Naive thymus-derived CD8-positive, alpha-beta T cell (primary cell): ENCODE measurements at regions of chr5 and their contacts with region 1.

Region 1: DNA sequence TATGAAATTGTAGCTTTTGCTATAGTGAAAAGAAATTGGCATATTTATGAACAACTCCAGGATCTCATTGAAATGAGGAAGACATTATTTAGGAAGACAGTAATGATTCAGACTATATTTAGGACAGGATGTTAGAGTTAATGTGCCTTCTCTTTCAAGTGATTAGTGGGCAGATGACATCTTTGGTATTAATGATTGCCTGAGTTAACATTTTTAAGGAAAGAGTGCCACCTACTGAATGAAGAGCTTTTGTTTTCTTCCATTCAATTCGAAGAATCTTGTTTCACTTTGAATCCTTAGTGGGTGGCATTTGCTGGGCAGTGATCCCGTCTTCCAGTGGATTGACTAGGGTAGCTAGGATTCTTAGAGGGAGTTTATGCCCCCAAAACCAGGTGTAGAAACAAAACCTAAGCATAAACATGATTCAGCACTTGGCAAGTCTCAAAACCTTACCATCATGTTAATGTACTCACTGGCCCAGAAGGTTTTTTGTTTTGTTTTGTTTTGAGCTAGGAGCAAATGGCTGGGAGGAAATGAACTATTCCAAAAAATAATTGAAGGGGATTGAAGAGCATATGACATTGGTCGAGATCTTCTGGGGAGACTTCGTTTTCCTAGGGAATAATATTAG is 23.2 kb downstream of the MAP3K1 start:
- DNase-seq: peak in 3 of 10 donors; percentile 46 to 52 (median 48)
- ATAC-seq: peak; percentile 53 to 70
- H3K4me3 Mint-ChIP-seq: peak overlapping the region in 6 of 10 donors; percentile 13 to 49 (median 40)
- H3K27ac Mint-ChIP-seq: peak overlapping the region; percentile 26 to 82 (median 72)
- H3K4me1 Mint-ChIP-seq: peaks cover 39 to 94% (median 80%) of the 10 kb centered on the region in 4 donors
- H3K27me3 Mint-ChIP-seq: no peaks in the 10 kb centered on the region

Region 2: GRCh38 chr5:56270568-56271392 is 567.7 kb before region 1 on chr5:
- POLR2A ChIA-PET with region 1: interaction called, 15 read pairs
- DNase-seq: peak; percentile 52 to 83 (median 68)
- ATAC-seq: peak; percentile 94 to 97
- H3K4me3 Mint-ChIP-seq: peak overlapping the region in 8 of 10 donors; percentile 19 to 70 (median 31)
- H3K27ac Mint-ChIP-seq: peak overlapping the region in 5 of 10 donors; percentile 11 to 83 (median 40)
- H3K4me1 Mint-ChIP-seq: peaks cover 10 to 20% (median 12%) of the 10 kb centered on the region in 4 donors
- H3K27me3 Mint-ChIP-seq: peaks cover 0 to 8% (median 3%) of the 10 kb centered on the region in 5 donors